ENCODE measurements at regions of chr12 and their contacts with region 1.

Region 1: GRCh38 chr12:40010899-40011774 is 94.7 kb downstream of the SLC2A13 start:
- DNase-seq: peak; percentile 91

Region 2: DNA sequence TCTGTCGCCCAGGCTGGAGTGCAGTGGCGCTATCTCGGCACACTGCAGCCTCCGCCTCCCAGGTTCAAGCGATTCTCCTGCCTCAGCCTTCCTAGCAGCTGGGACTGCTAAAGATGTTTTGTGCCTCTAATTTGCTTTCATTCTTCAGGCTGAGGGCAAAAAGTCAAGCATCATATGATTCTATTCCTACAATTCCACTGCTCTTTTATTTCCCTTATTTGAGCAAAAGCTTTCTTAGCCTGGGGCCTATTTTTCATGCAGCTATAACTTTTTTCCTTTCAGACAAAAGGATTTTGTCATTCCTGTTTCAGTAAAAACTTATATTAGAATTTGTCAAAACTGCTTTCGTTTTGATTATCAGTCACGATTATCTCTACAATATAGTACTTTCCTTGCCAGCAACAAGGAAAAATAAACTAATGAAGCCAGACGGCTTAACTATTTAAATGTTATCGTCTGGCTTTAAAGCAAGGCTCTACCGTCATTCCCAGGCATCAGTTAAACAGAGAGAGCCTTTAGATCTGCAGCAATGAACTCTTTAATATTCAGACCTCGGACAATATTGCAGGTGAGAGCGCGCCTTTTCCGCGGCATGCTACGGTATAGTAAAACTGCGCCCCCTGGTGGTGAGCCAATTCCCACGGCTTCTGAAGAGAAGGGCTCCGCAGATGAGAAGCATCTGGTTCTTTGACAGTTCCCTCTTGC is 96.1 kb after region 1 on chr12:
- in situ Hi-C with region 1: loop called (anchors 25 kb)
- DNase-seq: peak; percentile 90